ENCODE measurements at regions of chr2 and their contacts with region 1.

Region 1: DNA sequence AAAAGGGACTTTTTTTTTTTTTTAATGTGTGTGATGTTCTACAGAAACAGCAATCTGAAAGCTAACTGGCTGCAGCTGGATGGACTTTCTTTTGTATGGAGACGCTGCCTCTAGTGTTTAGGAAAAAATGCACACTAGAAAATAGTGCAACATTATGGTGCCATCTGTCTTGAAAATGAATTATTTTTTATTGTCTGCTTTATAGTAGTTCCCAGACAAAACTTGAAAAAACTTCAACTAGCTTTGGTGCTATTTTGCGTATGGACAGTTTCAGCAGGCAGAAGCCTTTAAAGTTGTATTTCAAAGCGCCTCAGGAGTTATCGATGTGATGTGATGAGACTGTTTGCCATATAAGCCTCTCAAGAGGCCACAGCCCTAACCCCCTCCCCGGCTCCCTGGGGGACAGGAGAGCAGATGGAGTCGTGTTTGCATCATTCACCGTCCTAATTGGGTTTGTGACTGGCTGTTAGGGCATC is 86.9 kb downstream of the LTBP1 start:
- DNase-seq: peak; percentile 42
- H3K4me3 ChIP-seq: peak overlapping the region in 2 of 3 experiments; percentile 8 to 30
- H3K27ac ChIP-seq: no peak overlapping the region
- H3K4me1 ChIP-seq: peaks cover 25% of the 10 kb centered on the region
- H3K27me3 ChIP-seq: no peaks in the 10 kb centered on the region
- CTCF ChIP-seq: peak; percentile 72 to 78

Region 2: DNA sequence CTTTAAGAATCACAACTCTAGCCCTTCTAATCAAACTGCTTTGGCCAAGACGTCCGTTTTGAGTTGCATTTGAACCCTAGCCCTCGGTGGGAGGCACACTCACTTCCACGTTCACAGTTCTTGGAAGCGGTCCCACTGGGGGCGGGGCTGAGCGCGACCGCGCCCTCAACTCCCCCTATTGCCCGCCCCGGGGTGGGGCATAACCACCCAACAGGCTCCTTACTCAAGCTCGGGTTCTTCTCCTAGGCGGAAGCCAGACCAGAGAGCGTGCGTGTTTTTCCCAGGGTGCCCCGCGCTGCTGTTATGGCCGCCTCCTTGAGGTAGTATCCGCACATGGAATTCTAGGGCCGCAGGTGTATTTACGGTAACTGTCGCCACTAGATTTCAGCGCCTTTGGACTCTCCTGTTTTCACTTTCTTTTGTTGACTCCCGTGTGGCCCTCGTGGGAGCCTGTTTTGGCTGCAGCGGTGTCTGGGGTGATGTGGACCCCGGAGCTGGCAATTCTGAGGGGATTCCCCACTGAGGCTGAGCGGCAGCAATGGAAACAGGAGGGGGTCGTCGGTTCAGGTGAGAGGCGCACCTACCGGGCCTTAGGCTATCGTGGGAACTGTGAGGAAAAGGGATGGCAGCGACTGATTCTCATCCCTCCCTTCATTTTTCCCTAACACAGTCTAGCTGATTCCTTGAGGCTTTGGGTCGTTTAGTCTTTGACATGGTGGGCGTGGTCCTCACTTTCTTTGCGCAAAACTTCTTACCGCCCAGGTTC is 405.6 kb before region 1 on chr2 and contains the start of gene TTC27:
- CTCF ChIA-PET with region 1: no interaction called
- dilution Hi-C with region 1: no loop called
- in situ Hi-C with region 1: no loop called
- intact Hi-C with region 1: loop called (anchors 5 kb)
- DNase-seq: peak; percentile 93
- H3K4me3 ChIP-seq: peak within 1 kb of the TSS; percentile 78 to 96 (median 90)
- H3K27ac ChIP-seq: peak within 1 kb of the TSS; percentile 79
- H3K4me1 ChIP-seq: peaks cover 5% of the 10 kb centered on the region
- H3K27me3 ChIP-seq: no peaks in the 10 kb centered on the region
- CTCF ChIP-seq: no peak
- total RNA-seq, gene TTC27: 18.5 to 26.5 TPM

Region 3: GRCh38 chr2:32792416-32792815 is 241.2 kb before region 1 on chr2:
- CTCF ChIA-PET with region 1: no interaction called
- dilution Hi-C with region 1: no loop called
- in situ Hi-C with region 1: no loop called
- intact Hi-C with region 1: no loop called
- DNase-seq: no peak
- H3K4me3 ChIP-seq: no peak overlapping the region
- H3K27ac ChIP-seq: no peak overlapping the region
- H3K4me1 ChIP-seq: no peaks in the 10 kb centered on the region
- H3K27me3 ChIP-seq: no peaks in the 10 kb centered on the region
- CTCF ChIP-seq: no peak

Region 4: GRCh38 chr2:32838418-32838817 is 195.2 kb before region 1 on chr2:
- CTCF ChIA-PET with region 1: no interaction called
- dilution Hi-C with region 1: no loop called
- in situ Hi-C with region 1: no loop called
- intact Hi-C with region 1: no loop called
- DNase-seq: no peak
- H3K4me3 ChIP-seq: no peak overlapping the region
- H3K27ac ChIP-seq: no peak overlapping the region
- H3K4me1 ChIP-seq: no peaks in the 10 kb centered on the region
- H3K27me3 ChIP-seq: no peaks in the 10 kb centered on the region
- CTCF ChIP-seq: no peak

Region 5: GRCh38 chr2:33069894-33070651 is 36.4 kb after region 1 on chr2:
- CTCF ChIA-PET with region 1: no interaction called
- dilution Hi-C with region 1: loop called (anchors 5 kb)
- in situ Hi-C with region 1: no loop called
- intact Hi-C with region 1: loop called (anchors 5 kb)
- DNase-seq: peak; percentile 98
- H3K4me3 ChIP-seq: peak overlapping the region; percentile 18 to 37 (median 21)
- H3K27ac ChIP-seq: peak overlapping the region; percentile 99
- H3K4me1 ChIP-seq: peaks cover 43% of the 10 kb centered on the region
- H3K27me3 ChIP-seq: no peaks in the 10 kb centered on the region
- CTCF ChIP-seq: no peak

Region 6: GRCh38 chr2:33267756-33268155 is 234.1 kb after region 1 on chr2:
- CTCF ChIA-PET with region 1: interaction called, 7 read pairs
- dilution Hi-C with region 1: no loop called
- in situ Hi-C with region 1: loop called (anchors 5 to 10 kb)
- intact Hi-C with region 1: loop called (anchors 1 kb)
- DNase-seq: peak; percentile 6
- H3K4me3 ChIP-seq: no peak overlapping the region
- H3K27ac ChIP-seq: no peak overlapping the region
- H3K4me1 ChIP-seq: peaks cover 8% of the 10 kb centered on the region
- H3K27me3 ChIP-seq: no peaks in the 10 kb centered on the region
- CTCF ChIP-seq: peak in 1 of 2 donors; percentile 21

Region 7: GRCh38 chr2:33380001-33380609 is 346.5 kb after region 1 on chr2:
- CTCF ChIA-PET with region 1: interaction called, 21 read pairs
- dilution Hi-C with region 1: no loop called
- in situ Hi-C with region 1: loop called (anchors 10 kb)
- intact Hi-C with region 1: no loop called
- DNase-seq: no peak
- H3K4me3 ChIP-seq: no peak overlapping the region
- H3K27ac ChIP-seq: no peak overlapping the region
- H3K4me1 ChIP-seq: no peaks in the 10 kb centered on the region
- H3K27me3 ChIP-seq: no peaks in the 10 kb centered on the region
- CTCF ChIP-seq: peak; percentile 66 to 89

Region 8: GRCh38 chr2:33599175-33599942 is 565.7 kb after region 1 on chr2 and contains the start of gene FAM98A:
- CTCF ChIA-PET with region 1: interaction called, 4 read pairs
- dilution Hi-C with region 1: no loop called
- in situ Hi-C with region 1: loop called (anchors 25 kb)
- intact Hi-C with region 1: no loop called
- DNase-seq: peak; percentile 98
- H3K4me3 ChIP-seq: peak within 1 kb of the TSS; percentile 55 to 100 (median 93)
- H3K27ac ChIP-seq: peak within 1 kb of the TSS; percentile 46
- H3K4me1 ChIP-seq: peaks cover 5% of the 10 kb centered on the region
- H3K27me3 ChIP-seq: no peaks in the 10 kb centered on the region
- CTCF ChIP-seq: no peak
- total RNA-seq, gene FAM98A: 32.7 to 63.1 TPM

Measured in mammary epithelial cell (primary cell).